Heart right ventricle (tissue), 16 donors: ENCODE measurements at regions of chr17 and their contacts with region 1.

Region 1: GRCh38 chr17:29617125-29617480 is 5.6 kb downstream of the CORO6 start:
- DNase-seq: peak; percentile 56 to 75
- ATAC-seq: no peak
- H3K4me3 ChIP-seq: peak overlapping the region in 7 of 10 donors; percentile 19 to 59 (median 39)
- H3K27ac ChIP-seq: peak overlapping the region in 1 of 10 donors; percentile 83
- H3K4me1 ChIP-seq: peaks cover 14 to 95% (median 77%) of the 10 kb centered on the region in 9 donors
- H3K27me3 ChIP-seq: peaks cover 0 to 46% (median 0%) of the 10 kb centered on the region in 7 donors
- CTCF ChIP-seq: peak in 7 of 9 donors; percentile 26 to 73 (median 41)

Region 2: GRCh38 chr17:29444589-29444988 is 172.5 kb before region 1 on chr17:
- intact Hi-C with region 1: no loop called
- DNase-seq: no peak
- ATAC-seq: peak in 2 of 8 donors; percentile 34 to 45
- H3K4me3 ChIP-seq: no peak overlapping the region
- H3K27ac ChIP-seq: no peak overlapping the region
- H3K4me1 ChIP-seq: peaks cover 5 to 57% (median 44%) of the 10 kb centered on the region in 9 donors
- H3K27me3 ChIP-seq: no peaks in the 10 kb centered on the region
- CTCF ChIP-seq: no peak

Region 3: GRCh38 chr17:29771551-29771950 is 154.4 kb after region 1 on chr17:
- intact Hi-C with region 1: loop called in 2 of 10 experiments (anchors 5 to 10 kb)
- DNase-seq: no peak
- ATAC-seq: no peak
- H3K4me3 ChIP-seq: no peak overlapping the region
- H3K27ac ChIP-seq: no peak overlapping the region
- H3K4me1 ChIP-seq: peaks cover 0 to 7% (median 0%) of the 10 kb centered on the region in 9 donors
- H3K27me3 ChIP-seq: no peaks in the 10 kb centered on the region
- CTCF ChIP-seq: no peak